ENCODE measurements at regions of chr15 and their contacts with region 1.

Region 1: GRCh38 chr15:63504247-63504978 is at the start of gene USP3:
- DNase-seq: peak; percentile 97
- ATAC-seq: peak; percentile 95
- H3K4me3 ChIP-seq: peak within 1 kb of the TSS; percentile 89 to 93
- H3K27ac ChIP-seq: peak within 1 kb of the TSS; percentile 81 to 92
- H3K4me1 ChIP-seq: peaks cover 1 to 4% of the 10 kb centered on the region in 2 donors
- H3K27me3 ChIP-seq: no peaks in the 10 kb centered on the region
- total RNA-seq, gene USP3: 46.9 to 60.0 TPM

Region 2: GRCh38 chr15:63553388-63553791 is 49.0 kb after region 1 on chr15:
- intact Hi-C with region 1: loop called (anchors 5 to 10 kb)
- DNase-seq: no peak
- ATAC-seq: peak; percentile 84
- H3K4me3 ChIP-seq: peak overlapping the region in 1 of 2 donors; percentile 34
- H3K27ac ChIP-seq: no peak overlapping the region
- H3K4me1 ChIP-seq: peaks cover 2 to 3% of the 10 kb centered on the region in 2 donors
- H3K27me3 ChIP-seq: no peaks in the 10 kb centered on the region